ENCODE measurements at regions of chr19 and their contacts with region 1.

Region 1: GRCh38 chr19:50461066-50461875 is 15.0 kb upstream of the EMC10 start:
- H3K4me3 Mint-ChIP-seq: no peak overlapping the region
- H3K27ac Mint-ChIP-seq: no peak overlapping the region
- H3K4me1 Mint-ChIP-seq: peaks cover 8% of the 10 kb centered on the region
- H3K27me3 Mint-ChIP-seq: peaks cover 48% of the 10 kb centered on the region

Region 2: DNA sequence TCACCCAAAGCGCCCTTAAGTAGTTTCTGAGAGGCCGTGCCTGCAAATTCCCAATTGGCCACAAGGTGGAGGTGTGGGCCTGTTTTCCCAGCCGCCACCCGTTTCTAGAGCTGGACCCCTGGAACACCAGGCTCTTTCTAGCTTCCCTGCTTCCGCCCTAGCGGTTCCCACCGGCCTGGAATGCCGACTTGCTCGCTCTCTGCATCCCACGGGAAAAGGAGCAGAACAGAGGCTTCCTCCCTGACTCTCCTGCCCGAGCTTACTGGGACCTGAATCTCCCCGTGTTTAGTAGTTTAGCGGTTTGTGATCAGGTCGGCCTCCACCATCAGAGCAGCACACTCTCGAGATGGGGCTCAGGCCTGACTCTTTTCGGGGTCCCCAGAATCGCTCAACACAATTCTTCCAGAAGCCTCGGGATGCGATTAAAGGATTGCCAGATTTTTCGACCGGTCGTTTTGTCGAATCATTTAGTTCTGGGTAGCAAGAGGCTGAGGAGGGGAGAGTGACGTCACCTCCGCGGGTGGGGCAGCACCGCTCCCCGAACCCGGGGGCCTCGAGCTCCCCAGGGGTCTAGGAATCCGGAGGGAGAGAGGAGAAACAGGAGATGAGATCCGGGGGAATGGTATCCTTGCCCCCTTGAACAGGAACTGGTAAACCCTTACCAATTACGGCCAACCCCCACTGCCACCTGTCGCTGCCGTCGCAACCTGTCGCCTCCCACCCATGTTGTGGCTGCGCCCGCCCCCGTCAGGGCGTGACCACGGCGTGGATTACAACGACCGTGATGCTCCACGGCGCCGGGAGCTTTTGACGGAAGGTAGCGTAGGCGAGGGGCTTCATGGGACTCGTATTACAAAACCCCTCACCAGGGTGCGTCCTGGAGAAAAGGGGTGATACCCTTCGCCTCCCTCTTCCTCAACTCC is 103.8 kb before region 1 on chr19:
- intact Hi-C with region 1: loop called (anchors 1 kb)
- H3K4me3 Mint-ChIP-seq: peak overlapping the region; percentile 91
- H3K27ac Mint-ChIP-seq: peak overlapping the region; percentile 95
- H3K4me1 Mint-ChIP-seq: peaks cover 55% of the 10 kb centered on the region
- H3K27me3 Mint-ChIP-seq: peaks cover 20% of the 10 kb centered on the region

Region 3: DNA sequence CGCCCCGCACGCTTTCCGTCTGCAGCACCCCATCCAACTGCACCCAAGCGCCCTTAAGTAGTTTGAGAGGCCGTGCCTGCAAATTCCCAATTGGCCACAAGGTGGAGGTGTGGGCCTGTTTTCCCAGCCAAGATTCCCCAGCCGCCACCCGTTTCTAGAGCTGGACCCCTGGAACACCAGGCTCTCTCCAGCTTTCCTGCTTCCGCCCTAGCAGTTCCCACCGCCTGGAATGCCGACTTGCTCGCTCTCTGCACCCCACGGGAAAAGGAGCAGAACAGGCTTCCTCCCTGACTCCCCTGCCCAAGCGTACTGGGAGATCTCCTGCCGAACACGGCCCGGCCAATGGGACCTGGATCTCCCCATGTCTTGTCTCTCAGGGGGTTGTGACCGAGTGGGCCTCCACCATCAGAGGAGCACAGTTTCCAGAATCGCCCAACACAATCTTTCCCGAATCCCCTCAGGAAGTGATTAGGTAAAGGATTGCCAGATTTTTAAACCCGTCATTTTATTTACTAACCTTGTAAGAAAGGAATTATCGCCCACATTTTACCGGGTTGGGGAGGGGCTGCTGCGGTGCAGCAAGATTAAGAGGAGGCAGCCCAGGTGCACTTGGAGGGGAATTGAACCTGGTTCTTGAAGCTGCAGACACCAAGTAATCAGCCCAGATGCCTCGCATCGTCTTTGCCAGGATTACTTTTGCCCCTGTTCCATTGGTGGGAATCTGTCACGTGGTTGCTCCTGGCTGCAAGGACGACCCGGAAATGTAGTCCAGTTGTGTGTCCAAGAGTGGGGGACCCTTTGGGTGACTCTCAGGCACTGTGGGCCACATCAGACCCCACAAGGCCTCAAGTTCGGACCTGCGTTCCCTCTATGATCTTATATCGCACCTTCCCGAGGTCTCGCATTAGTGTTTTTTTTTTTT is 92.4 kb before region 1 on chr19:
- intact Hi-C with region 1: loop called (anchors 1 kb)
- H3K4me3 Mint-ChIP-seq: peak overlapping the region; percentile 99
- H3K27ac Mint-ChIP-seq: peak overlapping the region; percentile 93
- H3K4me1 Mint-ChIP-seq: peaks cover 39% of the 10 kb centered on the region
- H3K27me3 Mint-ChIP-seq: peaks cover 3% of the 10 kb centered on the region